ENCODE measurements at regions of chr21 and their contacts with region 1.

Region 1: GRCh38 chr21:34073032-34073869 is at the starts of genes MRPS6 and SLC5A3:
- DNase-seq: peak; percentile 91
- CTCF ChIP-seq: peak; percentile 24

Region 2: GRCh38 chr21:34039678-34040382 is 33.4 kb before region 1 on chr21:
- CTCF ChIA-PET with region 1: no interaction called
- POLR2A ChIA-PET with region 1: no interaction called
- DNase-seq: no peak
- CTCF ChIP-seq: no peak

Region 3: GRCh38 chr21:34055615-34056014 is 17.6 kb before region 1 on chr21:
- CTCF ChIA-PET with region 1: no interaction called
- POLR2A ChIA-PET with region 1: interaction called, 14 read pairs
- DNase-seq: no peak
- CTCF ChIP-seq: no peak

Region 4: DNA sequence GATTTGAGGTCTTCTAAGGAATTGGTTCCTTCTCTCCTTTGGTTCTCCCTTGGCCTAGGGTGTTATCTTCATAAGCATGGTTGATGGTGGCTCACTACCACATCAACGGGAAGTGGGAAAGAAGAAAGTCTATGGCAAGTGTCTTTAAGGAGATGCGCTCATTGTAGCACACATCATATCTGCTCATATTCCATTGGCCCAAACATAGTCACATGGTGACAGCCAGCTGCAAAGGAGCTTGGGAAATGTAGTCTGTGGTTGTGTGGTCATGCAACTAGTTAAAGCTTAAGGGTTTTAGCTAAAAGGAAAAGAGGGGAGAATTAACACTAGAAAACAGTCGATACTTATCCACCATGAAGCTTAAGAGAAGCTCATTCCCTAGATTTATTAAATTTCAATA is 11.3 kb before region 1 on chr21:
- CTCF ChIA-PET with region 1: interaction called, 10 read pairs
- POLR2A ChIA-PET with region 1: interaction called, 5 read pairs
- DNase-seq: no peak
- CTCF ChIP-seq: no peak

Region 5: GRCh38 chr21:35179990-35180540 is 1106.8 kb after region 1 on chr21:
- CTCF ChIA-PET with region 1: no interaction called
- POLR2A ChIA-PET with region 1: no interaction called
- DNase-seq: no peak
- CTCF ChIP-seq: no peak